ENCODE measurements at regions of chr4 and their contacts with region 1.

Region 1: GRCh38 chr4:147731580-147732517 is at the start of gene ARHGAP10:
- DNase-seq: peak; percentile 86
- H3K4me3 ChIP-seq: peak within 1 kb of the TSS; percentile 85 to 93
- H3K27ac ChIP-seq: peak within 1 kb of the TSS; percentile 98
- H3K4me1 ChIP-seq: peaks cover 14% of the 10 kb centered on the region
- H3K27me3 ChIP-seq: no peaks in the 10 kb centered on the region
- CTCF ChIP-seq: no peak
- POLR2A ChIP-seq: peak; percentile 14
- total RNA-seq, gene ARHGAP10: 83.5 to 108 TPM

Region 2: GRCh38 chr4:147440442-147440841 is 291.4 kb before region 1 on chr4:
- intact Hi-C with region 1: no loop called
- DNase-seq: no peak
- H3K4me3 ChIP-seq: no peak overlapping the region
- H3K27ac ChIP-seq: no peak overlapping the region
- H3K4me1 ChIP-seq: no peaks in the 10 kb centered on the region
- H3K27me3 ChIP-seq: no peaks in the 10 kb centered on the region
- CTCF ChIP-seq: no peak
- POLR2A ChIP-seq: no peak

Region 3: DNA sequence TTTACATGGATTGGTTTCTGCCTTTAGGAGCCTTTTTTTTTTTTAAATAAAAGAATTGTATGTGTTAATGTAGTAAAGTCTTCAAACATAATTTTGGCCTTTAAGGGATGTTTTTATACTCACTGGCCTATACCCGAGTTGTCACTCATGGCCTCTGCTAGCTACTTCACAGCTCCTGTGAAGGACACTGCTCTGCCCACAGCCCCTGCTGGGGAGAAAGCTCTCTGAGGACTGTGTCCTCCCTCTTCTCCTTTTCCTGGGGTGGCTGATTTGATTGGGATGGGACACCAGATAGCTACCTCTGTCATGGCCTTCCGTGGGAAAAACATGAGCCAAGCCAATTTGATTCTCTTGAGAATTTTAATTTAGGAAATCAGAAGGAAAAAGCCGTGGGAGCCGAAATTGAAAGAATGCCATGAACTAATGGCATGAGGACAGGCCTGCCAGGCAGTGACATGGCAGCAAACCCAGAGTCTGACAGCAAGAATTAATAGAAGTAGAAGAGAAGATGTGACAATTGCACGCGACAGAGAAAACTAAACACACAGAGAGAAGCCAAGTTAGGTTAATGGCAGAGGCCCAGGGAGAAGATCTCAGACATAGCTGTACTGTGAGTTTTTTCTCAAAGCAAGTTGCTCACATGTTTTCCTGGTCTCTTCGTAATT is 81.4 kb after region 1 on chr4:
- intact Hi-C with region 1: loop called (anchors 10 kb)
- DNase-seq: peak; percentile 41
- H3K4me3 ChIP-seq: no peak overlapping the region
- H3K27ac ChIP-seq: peak overlapping the region; percentile 45 to 92
- H3K4me1 ChIP-seq: peaks cover 66% of the 10 kb centered on the region
- H3K27me3 ChIP-seq: no peaks in the 10 kb centered on the region
- CTCF ChIP-seq: no peak
- POLR2A ChIP-seq: no peak

Region 4: DNA sequence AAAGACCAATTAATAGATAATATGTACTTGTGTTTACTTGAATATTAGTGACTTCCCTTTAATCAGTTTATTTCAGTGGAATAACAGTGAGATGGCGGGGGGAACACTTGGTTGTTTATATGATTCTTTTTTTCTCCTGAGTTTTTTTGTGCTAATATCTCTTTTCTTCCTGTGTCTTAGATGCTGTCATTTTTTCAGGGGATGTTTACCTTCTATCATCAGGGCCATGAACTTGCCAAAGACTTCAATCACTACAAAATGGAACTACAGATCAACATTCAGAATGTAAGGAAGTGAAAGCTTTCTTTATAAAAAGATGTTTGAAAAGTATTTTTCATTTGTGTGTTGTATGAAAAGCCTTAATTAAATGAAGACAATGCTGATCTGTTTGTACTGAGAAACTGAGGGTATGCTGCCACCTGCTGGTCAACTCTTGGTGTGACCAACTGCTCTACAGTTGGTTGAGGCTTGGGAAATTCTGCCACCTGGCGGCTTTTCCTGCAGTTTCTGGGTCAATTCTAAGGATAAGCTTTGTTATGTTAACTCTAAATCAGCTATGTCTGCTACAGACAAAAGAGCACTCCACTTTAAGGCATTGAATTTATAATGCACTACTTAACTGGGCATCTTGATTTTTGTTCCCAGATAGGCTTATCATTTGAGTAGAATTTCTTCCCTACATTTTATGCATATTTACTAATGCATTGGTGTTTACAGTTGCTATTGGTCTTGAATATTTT is 134.9 kb after region 1 on chr4:
- intact Hi-C with region 1: loop called (anchors 10 kb)
- DNase-seq: peak; percentile 98
- H3K4me3 ChIP-seq: no peak overlapping the region
- H3K27ac ChIP-seq: peak overlapping the region; percentile 32 to 77
- H3K4me1 ChIP-seq: peaks cover 38% of the 10 kb centered on the region
- H3K27me3 ChIP-seq: no peaks in the 10 kb centered on the region
- CTCF ChIP-seq: peak; percentile 99 to 100 (median 100)
- POLR2A ChIP-seq: no peak

Measured in testis (tissue), 5 donors.